Breast epithelium (tissue), 4 donors: ENCODE measurements at regions of chr9 and their contacts with region 1.

Region 1: DNA sequence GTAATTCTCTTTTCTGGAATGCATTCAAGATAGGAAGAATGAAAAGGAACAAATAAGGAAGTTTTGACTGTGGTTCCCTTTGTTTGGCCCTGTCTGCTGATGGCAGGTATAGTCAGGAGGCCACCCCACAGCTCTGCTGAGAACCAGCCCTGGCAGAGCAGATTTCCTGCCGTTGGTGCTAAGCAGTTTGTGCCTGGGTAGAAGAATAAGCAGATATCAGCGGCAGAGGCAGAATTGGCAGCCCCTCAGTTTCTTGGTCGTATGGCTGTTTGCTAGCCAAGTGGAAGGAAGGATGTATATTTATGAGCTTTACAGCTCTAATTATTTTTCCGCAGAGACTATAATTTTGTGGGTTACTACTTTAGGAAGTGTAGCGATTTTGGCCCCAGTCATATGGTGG is 310.2 kb upstream of the RFX3 start:
- DNase-seq: no peak
- H3K4me3 ChIP-seq: no peak overlapping the region
- H3K27ac ChIP-seq: no peak overlapping the region
- H3K4me1 ChIP-seq: no peaks in the 10 kb centered on the region
- H3K27me3 ChIP-seq: no peaks in the 10 kb centered on the region
- CTCF ChIP-seq: no peak
- POLR2A ChIP-seq: no peak

Region 2: GRCh38 chr9:3553076-3553765 is 282.8 kb before region 1 on chr9:
- intact Hi-C with region 1: loop called (anchors 5 kb)
- DNase-seq: no peak
- H3K4me3 ChIP-seq: no peak overlapping the region
- H3K27ac ChIP-seq: no peak overlapping the region
- H3K4me1 ChIP-seq: no peaks in the 10 kb centered on the region
- H3K27me3 ChIP-seq: no peaks in the 10 kb centered on the region
- CTCF ChIP-seq: no peak
- POLR2A ChIP-seq: no peak

Region 3: DNA sequence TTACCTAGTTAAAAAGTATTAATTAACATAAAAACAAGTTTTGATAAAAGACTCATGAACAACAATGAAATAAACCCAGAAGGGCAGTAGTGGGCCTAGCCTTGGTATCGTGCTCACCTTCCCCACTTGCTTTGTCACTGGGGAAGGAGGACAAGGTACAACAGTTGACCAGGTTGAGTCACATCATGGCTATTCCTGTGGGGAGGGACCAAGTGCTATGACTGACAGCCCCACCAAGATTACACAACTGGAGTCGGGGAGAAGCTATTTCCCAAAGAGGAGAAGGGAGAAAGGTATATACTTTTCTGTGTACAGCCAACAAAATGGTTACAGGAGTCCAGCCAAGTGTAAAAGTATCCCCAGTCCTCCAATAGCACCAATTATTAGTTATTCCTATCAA is 58.9 kb before region 1 on chr9:
- intact Hi-C with region 1: no loop called
- DNase-seq: no peak
- H3K4me3 ChIP-seq: no peak overlapping the region
- H3K27ac ChIP-seq: no peak overlapping the region
- H3K4me1 ChIP-seq: no peaks in the 10 kb centered on the region
- H3K27me3 ChIP-seq: no peaks in the 10 kb centered on the region
- CTCF ChIP-seq: no peak
- POLR2A ChIP-seq: no peak